Endothelial cell of umbilical vein (primary cell): ENCODE measurements at regions of chr15 and their contacts with region 1.

Region 1: DNA sequence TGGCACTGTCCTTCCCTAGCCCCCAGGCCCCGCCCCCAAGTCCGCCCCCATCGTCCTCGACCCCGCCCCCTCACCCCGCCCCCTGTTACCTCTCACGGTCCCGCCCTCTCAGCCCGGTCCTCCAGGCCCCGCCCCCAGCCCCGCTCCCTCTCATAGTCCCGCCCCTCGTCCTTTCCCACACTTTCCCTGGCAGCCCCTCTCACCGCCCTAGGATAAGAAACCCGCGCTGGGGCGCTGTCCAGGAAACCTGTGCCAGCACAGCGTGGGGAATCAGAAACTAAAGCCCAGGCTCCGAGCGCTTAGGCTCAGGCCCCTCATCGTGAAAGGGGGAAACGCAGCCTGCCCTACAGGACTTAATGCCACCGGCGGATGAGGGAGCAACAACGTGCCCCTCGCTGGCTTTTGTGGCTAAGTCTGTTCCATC is 20.9 kb downstream of the TRPM1 start:
- DNase-seq: peak; percentile 44
- H3K4me3 ChIP-seq: peak overlapping the region in 1 of 3 experiments; percentile 18
- H3K27ac ChIP-seq: no peak overlapping the region
- H3K4me1 ChIP-seq: no peaks in the 10 kb centered on the region
- H3K27me3 ChIP-seq: peaks cover 0 to 9% of the 10 kb centered on the region in 2 experiments
- CTCF ChIP-seq: no peak
- POLR2A ChIP-seq: no peak

Region 2: GRCh38 chr15:30991255-30992072 is 89.1 kb before region 1 on chr15 and contains the start of gene MTMR10:
- CTCF ChIA-PET with region 1: no interaction called
- POLR2A ChIA-PET with region 1: no interaction called
- dilution Hi-C with region 1: no loop called
- intact Hi-C with region 1: loop called (anchors 2 kb)
- DNase-seq: peak; percentile 78
- H3K4me3 ChIP-seq: peak within 1 kb of the TSS; percentile 81 to 96 (median 91)
- H3K27ac ChIP-seq: peak within 1 kb of the TSS; percentile 88
- H3K4me1 ChIP-seq: peaks cover 31% of the 10 kb centered on the region
- H3K27me3 ChIP-seq: no peaks in the 10 kb centered on the region
- CTCF ChIP-seq: no peak
- POLR2A ChIP-seq: peak; percentile 93
- total RNA-seq, gene MTMR10: 65.5 and 88.5 TPM in 2 replicates